ENCODE measurements at regions of chr9 and their contacts with region 1.

Region 1: GRCh38 chr9:108565651-108566378 is 290.0 kb downstream of the ACTL7B start:
- DNase-seq: peak; percentile 62 to 77
- H3K4me3 ChIP-seq: no peak overlapping the region
- H3K27ac ChIP-seq: no peak overlapping the region
- H3K4me1 ChIP-seq: no peaks in the 10 kb centered on the region
- H3K27me3 ChIP-seq: no peaks in the 10 kb centered on the region
- CTCF ChIP-seq: peak; percentile 92

Region 2: GRCh38 chr9:107340920-107341632 is 1224.7 kb before region 1 on chr9:
- CTCF ChIA-PET with region 1: no interaction called
- POLR2A ChIA-PET with region 1: no interaction called
- intact Hi-C with region 1: loop called (anchors 10 kb)
- DNase-seq: peak; percentile 67 to 80
- H3K4me3 ChIP-seq: no peak overlapping the region
- H3K27ac ChIP-seq: no peak overlapping the region
- H3K4me1 ChIP-seq: peaks cover 13% of the 10 kb centered on the region
- H3K27me3 ChIP-seq: no peaks in the 10 kb centered on the region
- CTCF ChIP-seq: peak; percentile 92

Region 3: DNA sequence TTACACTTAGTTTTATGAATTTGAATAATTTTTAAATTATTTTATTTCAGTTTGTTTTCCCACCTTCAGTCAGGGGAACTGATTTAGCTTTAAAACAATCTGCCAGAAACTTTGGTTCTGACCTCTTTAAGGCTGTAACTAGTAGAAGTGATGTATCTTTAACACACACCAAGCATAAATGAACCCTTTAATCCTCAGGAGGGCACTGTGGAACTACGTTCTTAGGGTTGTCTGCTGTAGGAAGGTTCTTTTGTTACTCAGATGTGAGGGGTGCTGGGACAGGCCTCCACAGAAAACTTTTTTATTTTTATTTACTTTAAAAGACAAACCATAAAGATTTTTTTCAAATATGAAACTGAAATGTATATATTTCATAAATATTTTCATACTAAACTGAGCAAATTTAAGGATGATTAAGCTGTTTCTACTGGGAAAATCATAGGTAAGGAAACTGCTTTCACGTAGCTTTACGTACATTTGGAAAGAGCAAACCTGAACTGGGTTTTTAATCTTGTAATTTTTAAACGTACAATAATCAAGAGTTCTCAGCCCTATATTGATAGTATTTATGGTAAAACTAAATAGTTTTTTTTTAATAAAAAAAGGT is 1081.6 kb before region 1 on chr9:
- CTCF ChIA-PET with region 1: no interaction called
- POLR2A ChIA-PET with region 1: no interaction called
- intact Hi-C with region 1: loop called (anchors 1 kb)
- DNase-seq: peak; percentile 42 to 65
- H3K4me3 ChIP-seq: peak overlapping the region; percentile 100; the same call in 1 of the 2 replicates
- H3K27ac ChIP-seq: 0 out of 2 replicates have a peak overlapping the region, but pooled peaks have one; percentile 50
- H3K4me1 ChIP-seq: peaks cover 45% of the 10 kb centered on the region
- H3K27me3 ChIP-seq: no peaks in the 10 kb centered on the region
- CTCF ChIP-seq: peak; percentile 72

Region 4: DNA sequence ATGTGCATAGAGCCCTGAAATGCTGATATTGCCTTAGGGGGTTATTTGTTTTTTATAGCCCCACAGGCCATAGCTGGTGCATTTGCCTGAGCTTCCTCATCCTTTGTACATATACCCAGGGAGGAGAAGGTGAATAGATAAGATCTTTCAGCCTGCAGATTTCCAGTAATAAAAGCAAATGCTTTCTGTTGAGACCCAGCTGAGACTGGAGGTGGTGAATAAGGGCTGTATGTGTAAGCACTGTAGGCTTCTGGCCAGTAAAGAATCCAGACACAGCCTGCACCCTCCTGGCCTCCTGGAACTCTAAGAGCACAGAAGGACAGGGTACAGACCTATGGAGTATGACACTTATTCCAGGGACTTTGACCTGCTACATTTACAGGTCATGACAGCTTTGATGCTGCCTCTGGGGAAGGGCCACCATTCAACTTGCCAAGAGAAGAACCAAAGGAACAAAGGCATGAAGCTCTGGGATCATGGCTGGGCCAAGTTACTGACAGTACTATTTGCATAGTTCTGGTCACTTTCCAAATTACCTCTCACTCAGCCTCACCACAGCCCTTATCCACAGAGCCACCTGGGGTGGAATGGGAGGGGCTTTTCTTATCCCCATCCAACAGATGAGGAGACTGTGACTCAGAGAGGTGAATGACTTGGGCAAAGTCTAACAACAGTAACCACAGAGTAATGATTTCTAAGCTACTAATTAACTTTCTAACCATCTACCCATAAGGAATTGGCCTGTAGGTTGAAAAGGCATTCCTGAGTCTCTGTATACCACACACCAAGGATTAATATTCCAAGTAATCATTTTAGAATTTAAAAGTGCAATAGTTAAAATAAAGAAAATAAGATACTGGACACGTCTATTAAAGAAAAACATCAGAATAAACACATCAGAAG is 471.8 kb before region 1 on chr9:
- CTCF ChIA-PET with region 1: no interaction called
- POLR2A ChIA-PET with region 1: no interaction called
- intact Hi-C with region 1: loop called (anchors 10 kb)
- DNase-seq: peak; percentile 60 to 79
- H3K4me3 ChIP-seq: no peak overlapping the region
- H3K27ac ChIP-seq: peak overlapping the region; percentile 85
- H3K4me1 ChIP-seq: peaks cover 30% of the 10 kb centered on the region
- H3K27me3 ChIP-seq: no peaks in the 10 kb centered on the region
- CTCF ChIP-seq: no peak

Region 5: DNA sequence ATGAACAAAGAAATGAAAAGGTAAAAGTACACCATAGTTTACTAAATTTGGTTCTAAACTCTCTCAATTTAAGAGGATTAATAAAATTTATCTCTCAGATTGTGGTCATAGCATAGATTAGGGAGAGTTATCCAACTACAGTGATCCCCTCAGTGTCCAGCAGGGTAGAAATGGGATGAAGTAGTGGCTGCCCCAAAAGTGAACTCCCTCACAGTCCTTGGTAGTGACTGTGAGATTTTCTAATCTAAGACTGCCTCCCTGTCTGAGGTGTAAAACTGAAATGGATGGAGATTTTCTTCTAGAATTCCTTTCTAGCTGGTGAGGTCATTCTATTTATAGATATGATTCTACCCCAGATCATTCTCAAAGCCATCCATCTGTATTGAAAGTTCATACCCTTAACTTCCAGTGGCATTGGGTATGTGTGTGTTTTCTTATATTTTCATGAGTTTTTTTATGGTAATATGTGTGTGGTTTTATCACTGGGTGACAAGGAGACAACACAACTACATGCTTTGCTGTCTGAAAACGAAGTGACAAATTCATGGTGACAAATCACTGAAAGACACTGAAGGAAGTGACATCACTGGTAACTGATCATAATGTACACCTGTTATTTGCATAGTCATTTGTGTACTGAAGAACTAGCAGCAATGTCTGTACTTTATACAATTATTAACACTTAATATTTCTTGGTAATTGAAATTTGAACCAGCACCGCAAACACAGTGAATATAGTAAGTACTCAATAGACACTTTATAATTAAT is 165.3 kb before region 1 on chr9:
- CTCF ChIA-PET with region 1: no interaction called
- POLR2A ChIA-PET with region 1: no interaction called
- intact Hi-C with region 1: no loop called
- DNase-seq: no peak
- H3K4me3 ChIP-seq: no peak overlapping the region
- H3K27ac ChIP-seq: no peak overlapping the region
- H3K4me1 ChIP-seq: no peaks in the 10 kb centered on the region
- H3K27me3 ChIP-seq: no peaks in the 10 kb centered on the region
- CTCF ChIP-seq: no peak

Region 6: GRCh38 chr9:108444400-108445358 is 121.1 kb before region 1 on chr9:
- CTCF ChIA-PET with region 1: no interaction called
- POLR2A ChIA-PET with region 1: no interaction called
- intact Hi-C with region 1: loop called (anchors 2 kb)
- DNase-seq: peak; percentile 71 to 95
- H3K4me3 ChIP-seq: peak overlapping the region; percentile 34; the same call in 1 of the 2 replicates
- H3K27ac ChIP-seq: peak overlapping the region; percentile 80
- H3K4me1 ChIP-seq: peaks cover 45% of the 10 kb centered on the region
- H3K27me3 ChIP-seq: no peaks in the 10 kb centered on the region
- CTCF ChIP-seq: no peak

Region 7: DNA sequence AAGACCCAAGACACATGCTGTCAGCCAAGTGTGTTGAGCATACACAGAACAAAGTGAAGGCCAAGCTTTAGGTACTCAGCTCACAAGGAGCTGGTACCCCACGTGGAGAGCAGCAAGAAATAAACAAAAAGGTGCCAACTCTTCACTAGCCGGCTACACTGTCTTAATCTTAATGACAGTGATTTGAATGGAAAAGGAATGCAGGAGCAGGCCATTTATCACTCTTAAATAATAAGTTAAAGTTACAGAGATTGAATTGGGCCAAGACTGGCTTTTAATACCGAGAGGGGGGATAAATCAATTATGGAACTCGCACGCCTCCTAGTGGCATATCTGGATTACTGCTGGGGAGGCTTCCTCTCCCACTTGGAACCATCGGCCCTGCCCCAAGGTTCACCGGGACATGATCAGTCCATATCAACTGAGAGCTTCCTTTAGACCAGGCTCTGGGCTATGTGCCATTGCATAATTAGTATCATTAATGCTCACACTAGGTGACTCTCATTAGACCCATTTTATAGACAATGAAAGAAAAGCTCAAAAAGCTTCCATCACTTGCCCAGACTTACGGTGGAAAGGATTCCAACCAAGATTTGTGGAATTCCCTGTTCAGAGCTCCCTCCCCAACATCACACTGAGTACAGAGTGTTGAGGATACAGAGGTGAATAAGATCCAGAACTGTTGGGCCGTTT is 196.0 kb after region 1 on chr9:
- CTCF ChIA-PET with region 1: no interaction called
- POLR2A ChIA-PET with region 1: no interaction called
- intact Hi-C with region 1: loop called (anchors 1 kb)
- DNase-seq: peak in 1 of 2 experiments; percentile 56
- H3K4me3 ChIP-seq: no peak overlapping the region
- H3K27ac ChIP-seq: no peak overlapping the region
- H3K4me1 ChIP-seq: no peaks in the 10 kb centered on the region
- H3K27me3 ChIP-seq: no peaks in the 10 kb centered on the region
- CTCF ChIP-seq: peak; percentile 92